ENCODE measurements at regions of chr1 and their contacts with region 1.

Region 1: DNA sequence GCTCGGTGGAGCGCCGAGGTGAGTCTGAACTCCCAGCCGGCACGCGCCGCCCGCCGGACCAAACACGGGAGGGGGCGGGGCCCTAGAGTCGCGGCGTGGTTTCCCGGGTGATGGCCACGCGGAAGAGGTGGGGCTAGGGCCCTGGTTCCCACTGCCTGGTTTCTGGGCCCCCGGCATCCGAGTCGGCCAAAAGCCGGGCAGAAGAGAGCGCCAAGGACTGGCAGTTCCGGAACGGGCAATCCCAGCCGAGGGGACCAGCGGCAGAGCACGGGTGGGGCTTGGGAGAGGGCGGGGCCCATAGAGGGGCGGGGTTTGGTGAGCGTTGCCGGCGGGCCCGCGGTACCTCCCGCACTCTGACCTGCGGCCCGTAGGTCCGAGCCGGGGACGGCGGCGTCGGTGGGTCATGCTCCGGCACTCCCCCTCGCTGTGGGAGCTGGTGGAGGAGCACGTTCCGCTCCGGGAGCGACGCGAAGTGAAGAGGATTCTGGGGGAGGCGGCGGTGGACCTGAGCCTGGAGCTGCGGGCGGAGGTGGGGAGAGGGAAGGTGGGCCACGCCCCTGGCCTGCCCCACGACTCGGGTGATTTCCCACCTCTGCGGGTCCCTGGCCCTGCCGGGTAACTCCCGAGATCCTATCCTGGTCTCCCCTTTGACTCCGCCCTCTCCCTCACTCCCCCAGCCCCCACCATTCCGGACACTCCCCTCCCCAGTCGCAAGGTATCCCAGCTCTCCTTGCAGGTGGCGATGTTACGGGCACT is at the start of gene CCDC24:
- DNase-seq: peak; percentile 69 to 95
- H3K4me3 ChIP-seq: peak within 1 kb of the TSS; percentile 71 to 72
- H3K27ac ChIP-seq: peak within 1 kb of the TSS; percentile 72 to 80
- H3K4me1 ChIP-seq: peaks cover 10 to 20% of the 10 kb centered on the region in 2 donors
- H3K27me3 ChIP-seq: no peaks in the 10 kb centered on the region
- CTCF ChIP-seq: no peak
- total RNA-seq, gene CCDC24: 4.8 TPM

Region 2: DNA sequence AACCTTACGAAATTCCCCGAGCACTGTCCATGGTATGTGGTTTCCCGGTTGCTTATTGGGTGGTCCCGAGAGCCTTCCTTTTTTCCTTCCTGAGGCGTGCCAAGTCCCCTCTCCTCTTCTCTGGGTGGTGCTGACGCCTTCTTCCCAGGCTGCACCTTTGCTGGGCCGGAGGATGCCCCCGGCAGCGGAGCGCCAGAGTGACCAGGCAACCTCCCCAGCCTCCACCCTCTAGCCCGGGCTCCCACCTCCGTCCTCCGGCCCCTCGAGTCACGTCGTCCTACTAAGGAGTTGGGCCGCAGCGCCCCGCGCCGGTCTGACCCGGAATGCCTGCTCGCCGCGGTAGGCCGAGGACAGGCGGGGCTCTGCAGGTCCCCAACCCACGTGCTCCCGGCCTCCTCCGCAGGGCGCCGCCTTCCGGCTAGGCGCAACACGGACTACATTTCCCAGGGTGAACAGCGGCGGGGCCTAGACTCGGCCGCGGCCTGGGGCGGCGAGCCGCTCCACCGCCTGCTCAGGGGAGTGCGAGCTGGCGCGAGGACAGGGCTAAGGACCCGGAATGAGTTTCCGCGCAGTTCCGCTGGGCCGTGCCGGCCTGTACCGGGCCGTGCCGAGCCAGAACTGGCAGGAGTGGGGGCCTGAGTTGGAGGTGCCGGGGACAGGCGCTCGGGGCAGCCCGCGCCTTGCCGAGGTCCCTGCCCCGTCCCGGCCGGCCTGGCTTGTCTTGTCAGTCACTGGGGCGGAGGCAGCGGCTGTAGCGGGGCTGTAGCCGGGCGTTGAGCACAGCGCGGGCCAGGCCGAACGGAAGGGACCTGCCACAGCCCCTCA is 45.2 kb before region 1 on chr1 and contains the start of gene IPO13:
- intact Hi-C with region 1: loop called (anchors 5 kb)
- DNase-seq: peak; percentile 84 to 97
- H3K4me3 ChIP-seq: peak within 1 kb of the TSS; percentile 81 to 85
- H3K27ac ChIP-seq: peak within 1 kb of the TSS; percentile 89 to 98
- H3K4me1 ChIP-seq: peaks cover 13 to 26% of the 10 kb centered on the region in 2 donors
- H3K27me3 ChIP-seq: no peaks in the 10 kb centered on the region
- CTCF ChIP-seq: peak; percentile 73 to 84 (median 80)
- total RNA-seq, gene IPO13: 6.2 TPM

Region 3: GRCh38 chr1:44024031-44024909 is 32.6 kb after region 1 on chr1:
- intact Hi-C with region 1: no loop called
- DNase-seq: no peak
- H3K4me3 ChIP-seq: no peak overlapping the region
- H3K27ac ChIP-seq: no peak overlapping the region
- H3K4me1 ChIP-seq: peaks cover 0 to 3% of the 10 kb centered on the region in 2 donors
- H3K27me3 ChIP-seq: no peaks in the 10 kb centered on the region
- CTCF ChIP-seq: no peak